GM10248 (cell line): ENCODE measurements at regions of chr9 and their contacts with region 1.

Region 1: GRCh38 chr9:89428901-89429890 is 68.7 kb downstream of the SEMA4D start:
- DNase-seq: peak; percentile 64
- CTCF ChIP-seq: peak; percentile 56

Region 2: GRCh38 chr9:89410641-89411350 is 18.4 kb before region 1 on chr9:
- CTCF ChIA-PET with region 1: interaction called, 11 read pairs
- POLR2A ChIA-PET with region 1: interaction called, 3 read pairs
- DNase-seq: peak; percentile 80
- CTCF ChIP-seq: peak; percentile 14

Region 3: DNA sequence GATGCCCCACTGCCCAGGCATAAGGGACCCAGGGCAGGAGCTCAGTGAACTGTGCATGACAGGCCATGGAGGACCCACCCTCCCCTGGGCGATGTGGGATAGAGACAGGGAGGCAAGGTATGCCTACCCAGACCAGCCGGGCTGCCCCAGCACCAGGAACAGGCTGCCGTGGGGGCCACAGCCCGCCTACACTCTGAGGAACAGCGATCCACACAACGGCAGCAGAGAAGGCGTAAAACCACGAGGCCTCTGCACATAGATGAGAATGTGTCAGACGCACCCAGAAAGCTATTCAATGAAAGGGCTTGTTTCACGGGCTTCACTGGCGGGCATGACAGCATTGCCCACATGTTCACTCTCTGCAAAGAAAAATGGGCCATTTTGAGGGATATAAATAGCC is 19.2 kb after region 1 on chr9:
- CTCF ChIA-PET with region 1: interaction called, 22 read pairs
- POLR2A ChIA-PET with region 1: no interaction called
- DNase-seq: peak; percentile 67
- CTCF ChIP-seq: no peak

Region 4: GRCh38 chr9:89542401-89543021 is 113.3 kb after region 1 on chr9:
- CTCF ChIA-PET with region 1: interaction called, 81 read pairs
- POLR2A ChIA-PET with region 1: no interaction called
- DNase-seq: no peak
- CTCF ChIP-seq: no peak

Region 5: GRCh38 chr9:89564352-89564878 is 135.2 kb after region 1 on chr9:
- CTCF ChIA-PET with region 1: interaction called, 13 read pairs
- POLR2A ChIA-PET with region 1: no interaction called
- DNase-seq: peak; percentile 87
- CTCF ChIP-seq: peak; percentile 37

Region 6: DNA sequence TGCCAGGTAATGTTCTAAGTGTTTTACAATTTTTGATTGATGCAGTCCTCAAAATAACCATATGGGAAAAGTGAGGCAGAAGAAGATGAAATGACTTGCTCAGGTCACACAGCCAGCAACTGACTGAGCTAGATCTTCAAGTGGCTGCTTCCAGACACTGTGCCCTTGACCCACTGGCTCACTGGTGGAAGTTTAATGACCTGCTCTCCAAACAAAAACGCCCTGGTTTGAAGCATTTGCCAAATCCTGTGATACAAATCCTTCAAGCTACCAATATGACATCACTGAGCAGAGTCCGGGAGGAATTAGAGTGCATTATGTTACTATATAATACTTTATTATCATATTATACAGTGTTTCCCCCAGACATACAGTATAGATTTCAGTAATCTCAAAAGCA is 635.1 kb after region 1 on chr9:
- CTCF ChIA-PET with region 1: no interaction called
- POLR2A ChIA-PET with region 1: no interaction called
- DNase-seq: no peak
- CTCF ChIP-seq: no peak